SK-N-SH (cell line): ENCODE measurements at regions of chr3 and their contacts with region 1.

Region 1: GRCh38 chr3:151282921-151283320 is 4.6 kb upstream of the P2RY14 start:
- DNase-seq: peak; percentile 50
- H3K4me3 ChIP-seq: no peak overlapping the region; a peak in 1 of 4 replicates
- H3K27ac ChIP-seq: no peak overlapping the region
- H3K4me1 ChIP-seq: peaks cover 0 to 2% of the 10 kb centered on the region in 2 experiments; a peak in 1 of 4 replicates
- H3K27me3 ChIP-seq: no peaks in the 10 kb centered on the region
- CTCF ChIP-seq: peak; percentile 76
- EP300 ChIP-seq: no peak
- RAD21 ChIP-seq: peak; percentile 89

Region 2: DNA sequence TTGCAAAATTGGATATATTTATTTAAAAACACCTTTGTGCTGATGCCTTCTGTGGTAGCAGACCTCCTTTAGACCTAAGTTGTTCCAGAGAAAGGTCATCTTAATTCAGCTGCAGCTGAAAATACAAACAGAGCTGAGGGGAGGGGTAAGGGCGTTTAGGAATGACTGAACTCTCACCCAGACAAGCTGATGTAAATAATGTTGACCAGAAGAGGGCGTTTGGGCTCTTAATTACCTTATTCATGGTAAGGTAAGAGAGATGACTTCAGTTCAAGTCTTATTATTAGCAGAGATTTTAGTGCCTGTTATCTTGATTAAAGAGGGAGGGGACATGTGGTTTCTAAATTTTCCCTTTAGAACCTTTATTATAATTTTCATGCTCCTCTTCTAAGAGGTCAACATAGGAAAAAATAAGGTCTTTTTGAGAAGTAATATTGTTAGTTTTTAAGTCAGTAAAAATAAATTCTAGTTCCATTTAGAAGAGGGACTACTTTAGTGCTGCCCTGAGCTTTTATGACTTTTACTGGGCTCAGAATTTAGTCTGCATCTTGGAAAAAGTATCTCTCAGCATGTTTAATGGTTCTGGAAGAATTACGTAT is 126.2 kb before region 1 on chr3:
- CTCF ChIA-PET with region 1: interaction called, 11 read pairs
- POLR2A ChIA-PET with region 1: no interaction called
- DNase-seq: peak; percentile 53
- H3K4me3 ChIP-seq: no peak overlapping the region
- H3K27ac ChIP-seq: no peak overlapping the region
- H3K4me1 ChIP-seq: peaks cover 0 to 9% of the 10 kb centered on the region in 2 experiments; a peak in 2 of 4 replicates
- H3K27me3 ChIP-seq: peaks cover 5% of the 10 kb centered on the region; the same call in 1 of the 2 replicates
- CTCF ChIP-seq: peak; percentile 70
- EP300 ChIP-seq: no peak
- RAD21 ChIP-seq: peak; percentile 31; the same call in 1 of the 2 replicates